ENCODE measurements at regions of chr12 and their contacts with region 1.

Region 1: GRCh38 chr12:21677622-21678277 is 20.1 kb upstream of the LDHB start:
- DNase-seq: no peak
- ATAC-seq: no peak

Region 2: DNA sequence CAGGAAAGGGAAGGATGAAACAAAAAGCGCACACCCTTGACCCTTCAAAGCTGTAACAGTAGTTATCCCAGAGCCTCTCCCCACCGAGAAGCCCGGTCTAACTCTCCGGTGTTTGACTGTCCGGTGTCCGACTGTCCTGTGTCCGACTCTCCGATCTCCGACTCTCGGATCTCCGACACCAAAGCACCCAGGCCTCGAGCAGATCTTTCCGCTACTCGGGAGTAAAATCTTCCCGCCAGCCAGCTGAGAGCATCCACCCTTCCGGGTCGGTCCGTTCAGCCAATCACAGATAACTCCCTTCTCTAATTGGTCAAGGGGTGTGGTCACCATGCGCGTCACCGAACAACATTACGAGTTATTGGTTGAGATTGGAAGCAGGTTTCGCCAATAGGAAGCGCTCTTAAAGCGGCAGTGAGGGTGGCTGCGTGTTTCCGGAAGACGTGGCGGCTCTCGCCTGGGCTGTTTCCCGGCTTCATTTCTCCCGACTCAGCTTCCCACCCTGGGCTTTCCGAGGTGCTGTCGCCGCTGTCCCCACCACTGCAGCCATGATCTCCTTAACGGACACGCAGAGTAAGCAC is 176.3 kb before region 1 on chr12 and contains the starts of genes GOLT1B and RECQL:
- intact Hi-C with region 1: loop called in 1 of 2 experiments (anchors 2 kb)
- DNase-seq: peak; percentile 93
- ATAC-seq: peak; percentile 99 to 100
- total RNA-seq, gene GOLT1B: 24.9 to 29.7 TPM
- total RNA-seq, gene RECQL: 19.9 to 23.9 TPM